ENCODE measurements at regions of chr15 and their contacts with region 1.

Region 1: GRCh38 chr15:89958074-89958805 is 42.9 kb upstream of the ZNF710 start:
- DNase-seq: no peak
- ATAC-seq: no peak
- H3K4me3 ChIP-seq: no peak overlapping the region
- H3K27ac ChIP-seq: no peak overlapping the region
- H3K4me1 ChIP-seq: no peaks in the 10 kb centered on the region
- H3K27me3 ChIP-seq: peaks cover 8% of the 10 kb centered on the region
- CTCF ChIP-seq: no peak
- POLR2A ChIP-seq: no peak
- RAD21 ChIP-seq: no peak

Region 2: GRCh38 chr15:89714775-89715174 is 243.5 kb before region 1 on chr15:
- CTCF ChIA-PET with region 1: no interaction called
- POLR2A ChIA-PET with region 1: no interaction called
- dilution Hi-C with region 1: no loop called
- in situ Hi-C with region 1: no loop called
- intact Hi-C with region 1: loop called (anchors 10 kb)
- DNase-seq: no peak
- ATAC-seq: no peak
- H3K4me3 ChIP-seq: no peak overlapping the region
- H3K27ac ChIP-seq: no peak overlapping the region
- H3K4me1 ChIP-seq: no peaks in the 10 kb centered on the region
- H3K27me3 ChIP-seq: peaks cover 24% of the 10 kb centered on the region
- CTCF ChIP-seq: no peak
- POLR2A ChIP-seq: no peak
- RAD21 ChIP-seq: no peak

Region 3: GRCh38 chr15:90376789-90377188 is 418.5 kb after region 1 on chr15:
- CTCF ChIA-PET with region 1: no interaction called
- POLR2A ChIA-PET with region 1: no interaction called
- dilution Hi-C with region 1: no loop called
- in situ Hi-C with region 1: no loop called
- intact Hi-C with region 1: no loop called
- DNase-seq: no peak
- ATAC-seq: no peak
- H3K4me3 ChIP-seq: no peak overlapping the region
- H3K27ac ChIP-seq: no peak overlapping the region
- H3K4me1 ChIP-seq: no peaks in the 10 kb centered on the region
- H3K27me3 ChIP-seq: no peaks in the 10 kb centered on the region
- CTCF ChIP-seq: no peak
- POLR2A ChIP-seq: no peak
- RAD21 ChIP-seq: no peak